ENCODE measurements at regions of chr17 and their contacts with region 1.

Region 1: GRCh38 chr17:7687908-7688807 is at the start of gene WRAP53:
- DNase-seq: peak; percentile 95 to 97 (median 96)
- H3K4me3 ChIP-seq: peak within 1 kb of the TSS; percentile 85 to 99 (median 99)
- H3K4me3 Mint-ChIP-seq: peak within 1 kb of the TSS; percentile 96 to 100
- H3K27ac ChIP-seq: peak within 1 kb of the TSS; percentile 100
- H3K27ac Mint-ChIP-seq: peak within 1 kb of the TSS; percentile 99 to 100 (median 100)
- H3K4me1 ChIP-seq: peaks cover 24 to 35% of the 10 kb centered on the region in 2 donors
- H3K4me1 Mint-ChIP-seq: peaks cover 32% of the 10 kb centered on the region
- H3K27me3 ChIP-seq: no peaks in the 10 kb centered on the region
- H3K27me3 Mint-ChIP-seq: no peaks in the 10 kb centered on the region
- CTCF ChIP-seq: peak; percentile 100
- polyA plus RNA-seq, gene WRAP53: 6.3 to 9.8 (median 9.1) TPM

Region 2: GRCh38 chr17:7435221-7435675 is 252.9 kb before region 1 on chr17 and contains the start of gene TMEM102:
- intact Hi-C with region 1: loop called in 1 of 2 experiments (anchors 10 kb)
- DNase-seq: peak; percentile 97 to 98 (median 98)
- H3K4me3 ChIP-seq: peak within 1 kb of the TSS; percentile 77 to 95 (median 86)
- H3K4me3 Mint-ChIP-seq: peak within 1 kb of the TSS; percentile 86 to 94
- H3K27ac ChIP-seq: peak within 1 kb of the TSS; percentile 79 to 89
- H3K27ac Mint-ChIP-seq: peak within 1 kb of the TSS; percentile 90 to 97 (median 94)
- H3K4me1 ChIP-seq: peaks cover 46 to 50% of the 10 kb centered on the region in 2 donors
- H3K4me1 Mint-ChIP-seq: peaks cover 43% of the 10 kb centered on the region
- H3K27me3 ChIP-seq: peaks cover 14 to 18% of the 10 kb centered on the region in 2 donors
- H3K27me3 Mint-ChIP-seq: peaks cover 22 to 31% (median 24%) of the 10 kb centered on the region in 3 donors
- CTCF ChIP-seq: no peak
- polyA plus RNA-seq, gene TMEM102: 5.1 to 11.3 (median 9.8) TPM

Region 3: GRCh38 chr17:7572588-7573323 is 115.4 kb before region 1 on chr17:
- intact Hi-C with region 1: loop called in 1 of 2 experiments (anchors 5 kb)
- DNase-seq: peak; percentile 99 to 100 (median 100)
- H3K4me3 ChIP-seq: peak overlapping the region; percentile 60 to 100 (median 95)
- H3K4me3 Mint-ChIP-seq: peak overlapping the region; percentile 97 to 98
- H3K27ac ChIP-seq: peak overlapping the region; percentile 99
- H3K27ac Mint-ChIP-seq: peak overlapping the region; percentile 98 to 100 (median 99)
- H3K4me1 ChIP-seq: peaks cover 48 to 52% of the 10 kb centered on the region in 2 donors
- H3K4me1 Mint-ChIP-seq: peaks cover 54% of the 10 kb centered on the region
- H3K27me3 ChIP-seq: no peaks in the 10 kb centered on the region
- H3K27me3 Mint-ChIP-seq: peaks cover 0 to 9% (median 2%) of the 10 kb centered on the region in 3 donors
- CTCF ChIP-seq: no peak

Region 4: GRCh38 chr17:7586673-7587419 is 101.3 kb before region 1 on chr17:
- intact Hi-C with region 1: no loop called
- DNase-seq: no peak
- H3K4me3 ChIP-seq: peak overlapping the region in 1 of 3 experiments; percentile 58
- H3K4me3 Mint-ChIP-seq: peak overlapping the region; percentile 31 to 52
- H3K27ac ChIP-seq: peak overlapping the region in 1 of 2 donors; percentile 76
- H3K27ac Mint-ChIP-seq: peak overlapping the region; percentile 71 to 91 (median 83)
- H3K4me1 ChIP-seq: peaks cover 63 to 75% of the 10 kb centered on the region in 2 donors
- H3K4me1 Mint-ChIP-seq: peaks cover 48% of the 10 kb centered on the region
- H3K27me3 ChIP-seq: no peaks in the 10 kb centered on the region
- H3K27me3 Mint-ChIP-seq: peaks cover 0 to 2% (median 2%) of the 10 kb centered on the region in 3 donors
- CTCF ChIP-seq: no peak

Region 5: GRCh38 chr17:7614422-7615264 is 73.5 kb before region 1 on chr17 and contains the start of gene FXR2:
- intact Hi-C with region 1: loop called in 1 of 2 experiments (anchors 2 kb)
- DNase-seq: peak; percentile 99 to 100 (median 100)
- H3K4me3 ChIP-seq: peak within 1 kb of the TSS; percentile 59 to 82 (median 76)
- H3K4me3 Mint-ChIP-seq: peak within 1 kb of the TSS; percentile 83 to 92
- H3K27ac ChIP-seq: peak within 1 kb of the TSS; percentile 73 to 75
- H3K27ac Mint-ChIP-seq: peak within 1 kb of the TSS; percentile 85 to 93 (median 91)
- H3K4me1 ChIP-seq: peaks cover 25 to 34% of the 10 kb centered on the region in 2 donors
- H3K4me1 Mint-ChIP-seq: peaks cover 35% of the 10 kb centered on the region
- H3K27me3 ChIP-seq: no peaks in the 10 kb centered on the region
- H3K27me3 Mint-ChIP-seq: peaks cover 0 to 5% (median 1%) of the 10 kb centered on the region in 3 donors
- CTCF ChIP-seq: peak; percentile 36
- polyA plus RNA-seq, gene FXR2: 6.2 to 23.0 (median 9.2) TPM

Region 6: GRCh38 chr17:7729816-7730215 is 41.7 kb after region 1 on chr17:
- intact Hi-C with region 1: no loop called
- DNase-seq: peak in 2 of 3 donors; percentile 24 to 40
- H3K4me3 ChIP-seq: no peak overlapping the region
- H3K4me3 Mint-ChIP-seq: no peak overlapping the region
- H3K27ac ChIP-seq: no peak overlapping the region
- H3K27ac Mint-ChIP-seq: peak overlapping the region in 2 of 7 donors; percentile 12 to 21
- H3K4me1 ChIP-seq: peaks cover 4 to 13% of the 10 kb centered on the region in 2 donors
- H3K4me1 Mint-ChIP-seq: peaks cover 10% of the 10 kb centered on the region
- H3K27me3 ChIP-seq: no peaks in the 10 kb centered on the region
- H3K27me3 Mint-ChIP-seq: peaks cover 0 to 7% (median 3%) of the 10 kb centered on the region in 3 donors
- CTCF ChIP-seq: no peak

Region 7: DNA sequence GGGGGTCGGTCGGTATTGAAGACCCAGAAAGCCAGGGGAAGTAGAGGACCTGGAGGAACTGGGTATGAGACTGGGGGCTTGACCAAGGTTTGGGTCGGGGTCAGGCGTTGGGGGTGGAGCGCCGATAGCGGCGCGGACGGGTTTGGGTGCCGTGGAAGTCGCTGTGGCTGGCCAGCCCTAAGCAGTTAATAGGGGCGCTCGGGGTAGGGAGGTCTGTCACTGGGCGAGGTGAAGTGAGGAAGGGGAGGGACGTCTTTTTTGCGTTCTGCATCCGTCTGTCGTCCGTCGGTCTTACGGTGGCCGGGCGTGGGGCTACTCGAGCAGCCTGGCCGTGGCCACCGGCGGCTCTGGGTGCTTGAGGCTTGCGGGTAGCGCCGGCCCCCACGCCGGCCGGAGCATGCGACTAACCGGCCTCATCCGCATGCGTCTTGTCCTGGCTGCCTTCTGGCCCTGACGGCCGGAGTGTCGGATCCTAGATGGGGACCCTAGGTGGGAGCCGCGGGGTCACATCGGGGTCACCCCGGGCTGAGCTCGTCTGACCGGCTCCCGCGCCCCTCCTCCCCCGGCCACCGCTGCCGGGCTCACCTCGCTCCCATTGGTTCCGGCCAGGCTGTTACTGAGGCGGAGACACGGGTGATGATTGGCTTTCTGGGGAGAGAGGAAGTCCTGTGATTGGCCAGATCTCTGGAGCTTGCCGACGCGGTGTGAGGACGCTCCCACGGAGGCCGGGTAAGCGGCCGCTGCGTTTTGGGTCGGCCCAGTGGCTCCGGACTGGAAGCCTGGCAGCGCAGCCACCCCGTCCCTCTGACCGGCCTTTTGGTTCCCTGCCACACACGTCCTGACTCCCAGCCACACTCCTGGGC is 156.4 kb after region 1 on chr17:
- intact Hi-C with region 1: loop called in 1 of 2 experiments (anchors 5 kb)
- DNase-seq: peak; percentile 93 to 96 (median 95)
- H3K4me3 ChIP-seq: peak overlapping the region; percentile 66 to 92 (median 79)
- H3K4me3 Mint-ChIP-seq: peak overlapping the region; percentile 93 to 98
- H3K27ac ChIP-seq: peak overlapping the region; percentile 98 to 100
- H3K27ac Mint-ChIP-seq: peak overlapping the region; percentile 97 to 100 (median 100)
- H3K4me1 ChIP-seq: peaks cover 31 to 33% of the 10 kb centered on the region in 2 donors
- H3K4me1 Mint-ChIP-seq: peaks cover 26% of the 10 kb centered on the region
- H3K27me3 ChIP-seq: no peaks in the 10 kb centered on the region
- H3K27me3 Mint-ChIP-seq: peaks cover 0 to 14% (median 4%) of the 10 kb centered on the region in 3 donors
- CTCF ChIP-seq: no peak

Measured in CD14-positive monocyte (primary cell).